ENCODE measurements at regions of chr11 and their contacts with region 1.

Region 1: DNA sequence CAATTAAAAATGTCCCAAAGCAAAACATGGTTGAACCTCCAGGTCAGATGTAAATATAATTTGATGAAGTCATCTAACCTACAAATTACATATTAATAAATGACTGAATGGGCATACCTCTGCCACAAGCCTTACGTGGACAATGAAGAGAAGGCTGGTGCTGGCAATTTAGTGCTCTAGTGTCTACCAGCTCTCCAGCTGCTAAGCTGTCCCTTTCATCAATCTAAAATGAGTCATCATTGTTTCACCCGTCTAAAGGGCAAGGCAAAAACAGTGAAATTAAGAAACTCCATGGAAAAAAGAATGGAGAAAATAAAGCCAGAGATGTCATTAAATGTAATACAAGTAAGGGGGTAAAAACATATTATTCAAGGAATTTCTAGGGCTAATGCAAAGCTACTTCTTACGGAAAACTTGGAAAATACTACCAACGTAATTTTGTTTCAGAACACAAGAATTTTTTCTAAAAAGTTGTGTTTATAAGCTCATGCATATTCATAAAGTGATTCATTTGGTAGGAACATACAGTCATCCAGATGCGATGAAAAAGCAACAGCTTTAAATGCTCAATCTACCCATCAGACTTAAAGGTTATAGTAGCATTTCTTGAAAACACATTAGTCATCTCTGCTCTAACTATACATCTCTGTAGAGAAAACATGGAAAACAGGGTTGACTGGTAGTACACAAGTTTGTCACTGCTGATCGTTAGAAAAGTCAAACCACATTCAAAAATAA is 71.5 kb downstream of the SIK3 start:
- DNase-seq: no peak
- H3K4me3 Mint-ChIP-seq: peak overlapping the region; percentile 38
- H3K27ac Mint-ChIP-seq: peak overlapping the region; percentile 90
- H3K4me1 Mint-ChIP-seq: peaks cover 63% of the 10 kb centered on the region
- H3K27me3 Mint-ChIP-seq: no peaks in the 10 kb centered on the region

Region 2: GRCh38 chr11:116879800-116880625 is 146.7 kb before region 1 on chr11:
- intact Hi-C with region 1: loop called (anchors 5 kb)
- DNase-seq: no peak
- H3K4me3 Mint-ChIP-seq: no peak overlapping the region
- H3K27ac Mint-ChIP-seq: peak overlapping the region; percentile 66
- H3K4me1 Mint-ChIP-seq: peaks cover 25% of the 10 kb centered on the region
- H3K27me3 Mint-ChIP-seq: no peaks in the 10 kb centered on the region

Region 3: DNA sequence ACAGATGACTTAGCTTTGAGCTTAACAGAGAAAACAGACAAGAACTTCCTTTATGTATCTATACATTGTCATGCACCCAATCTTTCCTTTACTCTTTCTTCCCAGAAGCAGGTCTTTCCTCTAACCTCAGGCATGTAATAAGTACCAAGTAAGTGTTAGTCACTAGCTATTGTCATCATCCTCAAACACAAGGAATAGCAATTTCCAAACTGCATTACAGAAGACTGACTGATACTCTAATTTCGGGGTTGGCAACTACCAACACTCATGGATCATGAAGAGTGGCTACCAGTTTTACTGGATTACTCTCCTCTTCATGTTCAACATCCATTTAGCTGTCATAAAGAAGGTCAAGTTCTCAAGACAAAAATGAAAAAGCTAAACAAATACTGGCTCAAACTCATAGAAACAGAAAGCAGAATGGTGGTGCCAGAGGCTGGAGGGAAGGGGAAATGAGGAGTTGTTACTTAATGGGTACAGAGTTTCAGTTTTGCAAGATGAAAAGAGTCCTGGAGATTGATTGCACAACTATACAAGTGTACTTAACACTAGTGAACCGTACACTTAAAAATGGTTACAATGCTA is 40.1 kb before region 1 on chr11:
- intact Hi-C with region 1: loop called (anchors 1 kb)
- DNase-seq: no peak
- H3K4me3 Mint-ChIP-seq: peak overlapping the region; percentile 65
- H3K27ac Mint-ChIP-seq: peak overlapping the region; percentile 73
- H3K4me1 Mint-ChIP-seq: peaks cover 70% of the 10 kb centered on the region
- H3K27me3 Mint-ChIP-seq: no peaks in the 10 kb centered on the region

Region 4: DNA sequence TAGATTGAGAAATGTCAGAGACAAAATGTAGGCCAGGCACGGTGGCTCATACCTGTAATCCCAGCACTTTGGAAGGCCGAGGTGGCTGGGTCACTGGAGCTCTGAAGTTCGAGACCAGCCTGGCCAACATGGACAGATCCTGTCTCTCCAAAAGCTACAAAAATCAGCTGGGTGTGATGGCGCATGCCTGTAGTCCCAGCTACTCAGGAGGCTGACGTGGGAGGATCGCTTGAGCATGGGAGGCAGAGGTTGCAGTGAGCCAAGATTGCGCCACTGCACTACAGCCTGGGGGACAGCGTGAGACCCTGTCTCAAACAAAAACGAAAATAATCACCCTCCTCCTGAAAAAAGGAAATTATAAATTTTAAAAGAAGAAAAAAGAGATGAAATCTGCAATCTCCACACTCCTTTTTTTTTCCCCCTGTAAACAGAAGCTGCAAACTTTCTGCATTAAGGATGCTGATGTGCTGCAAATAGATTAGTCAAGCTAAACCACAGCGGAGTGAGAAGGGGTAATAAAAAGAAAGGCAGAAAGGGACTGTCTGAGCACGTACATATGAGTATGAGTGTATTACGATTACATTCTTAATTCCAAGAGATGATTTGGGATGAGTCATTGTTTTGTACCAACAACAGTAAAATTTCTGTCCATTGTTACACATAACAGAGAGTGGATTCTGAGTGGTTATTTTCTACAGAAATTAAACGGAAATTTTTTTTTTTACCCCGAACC is 15.8 kb before region 1 on chr11:
- intact Hi-C with region 1: loop called (anchors 1 kb)
- DNase-seq: no peak
- H3K4me3 Mint-ChIP-seq: no peak overlapping the region
- H3K27ac Mint-ChIP-seq: peak overlapping the region; percentile 78
- H3K4me1 Mint-ChIP-seq: peaks cover 38% of the 10 kb centered on the region
- H3K27me3 Mint-ChIP-seq: no peaks in the 10 kb centered on the region

Region 5: DNA sequence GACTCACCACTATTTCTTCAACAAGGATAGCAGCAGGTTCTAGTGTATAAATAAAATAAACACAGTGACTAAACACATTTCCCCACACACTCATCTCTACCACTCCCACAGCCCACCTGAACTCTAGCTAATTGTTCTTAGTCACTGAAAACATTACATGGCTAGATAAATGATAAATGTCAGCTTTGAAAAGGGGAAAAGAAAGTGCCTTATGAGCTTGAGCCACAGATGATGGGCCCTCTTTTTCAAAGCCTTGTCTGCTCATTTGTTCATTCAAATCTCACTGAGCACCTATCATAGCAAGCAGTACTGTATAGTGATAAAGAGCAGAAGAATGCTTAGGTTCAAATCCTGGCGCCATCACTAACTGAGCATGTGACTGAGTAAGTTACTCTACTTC is 13.1 kb after region 1 on chr11:
- intact Hi-C with region 1: loop called (anchors 1 kb)
- DNase-seq: no peak
- H3K4me3 Mint-ChIP-seq: no peak overlapping the region
- H3K27ac Mint-ChIP-seq: peak overlapping the region; percentile 11
- H3K4me1 Mint-ChIP-seq: peaks cover 60% of the 10 kb centered on the region
- H3K27me3 Mint-ChIP-seq: no peaks in the 10 kb centered on the region

Region 6: DNA sequence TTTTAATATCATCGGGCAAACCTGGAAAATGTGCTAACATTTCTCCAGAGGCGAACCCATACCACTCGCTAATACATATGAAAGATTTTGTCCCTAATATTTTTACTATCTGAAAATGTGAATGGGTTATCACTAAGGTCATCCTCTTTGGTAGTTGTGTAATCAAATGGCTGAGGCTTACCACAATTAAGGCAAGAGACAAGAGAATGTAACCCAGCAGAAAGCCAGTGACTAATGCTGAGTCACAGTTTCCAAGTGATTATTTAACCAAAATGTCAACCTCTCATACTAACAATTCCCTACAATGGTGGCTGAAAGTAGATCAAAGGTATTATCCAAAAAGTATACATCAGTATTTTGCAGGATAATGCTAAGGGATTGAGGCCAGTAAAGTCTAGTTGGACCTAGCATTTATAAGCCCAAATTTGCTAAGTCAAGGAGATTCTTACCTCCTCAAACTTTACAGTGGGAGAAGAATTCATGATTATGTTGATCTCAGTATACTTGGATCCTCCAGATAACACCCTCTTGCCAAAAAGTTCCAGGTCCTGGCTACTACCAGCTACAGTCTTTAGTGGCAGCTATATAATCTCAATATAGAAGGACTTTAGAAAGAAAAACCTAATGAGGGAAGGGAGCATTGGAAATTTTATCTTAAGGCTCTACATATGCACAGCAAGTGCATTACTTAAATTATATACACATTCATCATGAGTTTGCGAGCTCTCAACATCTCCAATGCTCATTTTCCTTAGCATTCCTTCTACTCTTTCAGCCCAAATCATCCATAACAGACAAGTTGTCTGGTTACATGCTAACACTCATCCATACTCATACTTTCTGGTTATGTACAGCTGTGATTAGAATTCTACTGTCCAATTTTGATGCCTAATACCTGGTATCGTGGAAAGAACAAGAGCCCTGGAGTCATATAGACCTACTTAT is 46.0 kb after region 1 on chr11:
- intact Hi-C with region 1: loop called (anchors 1 kb)
- DNase-seq: no peak
- H3K4me3 Mint-ChIP-seq: peak overlapping the region; percentile 19
- H3K27ac Mint-ChIP-seq: peak overlapping the region; percentile 53
- H3K4me1 Mint-ChIP-seq: peaks cover 58% of the 10 kb centered on the region
- H3K27me3 Mint-ChIP-seq: no peaks in the 10 kb centered on the region

Region 7: DNA sequence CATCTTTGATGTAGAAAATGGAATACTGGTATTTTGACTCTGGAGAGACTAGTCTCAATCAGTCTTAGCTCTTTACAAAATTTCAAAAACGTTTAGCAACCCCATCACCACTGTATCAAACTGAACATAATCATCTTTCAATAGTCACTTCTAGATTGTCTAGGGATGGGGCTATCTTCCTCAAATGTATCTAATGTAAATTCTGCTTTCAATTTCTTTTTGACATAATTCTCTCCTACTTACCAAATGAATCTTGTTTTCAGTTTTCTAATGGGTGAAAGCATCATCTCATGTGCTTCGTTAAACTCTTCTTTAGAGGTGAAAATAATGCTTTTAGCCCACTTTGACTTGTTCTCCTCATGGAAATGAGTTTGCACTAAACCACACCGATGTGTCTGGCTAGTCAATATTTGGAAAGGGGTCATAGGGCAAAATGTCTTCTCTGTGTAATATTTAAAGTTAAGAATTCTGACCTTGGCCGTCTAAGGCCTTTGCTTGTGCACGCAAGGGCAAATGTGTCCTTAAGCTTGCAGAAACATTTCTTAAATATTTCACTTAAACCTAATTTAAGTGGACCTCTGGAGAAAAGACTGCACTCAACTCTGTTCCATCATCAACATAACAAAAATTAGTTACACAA is 66.3 kb after region 1 on chr11:
- intact Hi-C with region 1: loop called (anchors 1 kb)
- DNase-seq: no peak
- H3K4me3 Mint-ChIP-seq: peak overlapping the region; percentile 53
- H3K27ac Mint-ChIP-seq: peak overlapping the region; percentile 81
- H3K4me1 Mint-ChIP-seq: peaks cover 77% of the 10 kb centered on the region
- H3K27me3 Mint-ChIP-seq: no peaks in the 10 kb centered on the region

Measured in activated T-helper 1 cell treated with anti-CD3 and anti-CD28 coated beads, Interleukin-12 subunit alpha, Interleukin-12 subunit beta, Interleukin-2, Interleukin-4 antibody, amounts not matched to agents 30 ng/mL and 10 ng/mL and 1 ng/mL, durations not matched to agents 14 hours and 24 hours and 36 hours (primary cell).